Right lobe of liver (tissue), 6 donors: ENCODE measurements at regions of chr19 and their contacts with region 1.

Region 1: GRCh38 chr19:38647368-38647965 is at the start of gene ACTN4:
- DNase-seq: peak; percentile 99 to 100 (median 100)
- ATAC-seq: peak; percentile 79 to 92 (median 86)
- H3K4me3 ChIP-seq: peak within 1 kb of the TSS; percentile 86 to 88 (median 87)
- H3K27ac ChIP-seq: peak within 1 kb of the TSS; percentile 89 to 94 (median 92)
- H3K4me1 ChIP-seq: peaks cover 0 to 32% (median 13%) of the 10 kb centered on the region in 4 donors
- H3K27me3 ChIP-seq: no peaks in the 10 kb centered on the region
- CTCF ChIP-seq: no peak
- POLR2A ChIP-seq: peak; percentile 100
- total RNA-seq, gene ACTN4: 142 to 306 (median 201) TPM

Region 2: GRCh38 chr19:38693380-38694223 is 46.1 kb after region 1 on chr19:
- intact Hi-C with region 1: loop called in 1 of 2 experiments (anchors 10 kb)
- DNase-seq: peak in 1 of 3 donors; percentile 60
- ATAC-seq: peak; percentile 16 to 51 (median 43)
- H3K4me3 ChIP-seq: no peak overlapping the region
- H3K27ac ChIP-seq: peak overlapping the region; percentile 23 to 67 (median 57)
- H3K4me1 ChIP-seq: peaks cover 0 to 59% (median 29%) of the 10 kb centered on the region in 4 donors
- H3K27me3 ChIP-seq: no peaks in the 10 kb centered on the region
- CTCF ChIP-seq: no peak
- POLR2A ChIP-seq: no peak

Region 3: DNA sequence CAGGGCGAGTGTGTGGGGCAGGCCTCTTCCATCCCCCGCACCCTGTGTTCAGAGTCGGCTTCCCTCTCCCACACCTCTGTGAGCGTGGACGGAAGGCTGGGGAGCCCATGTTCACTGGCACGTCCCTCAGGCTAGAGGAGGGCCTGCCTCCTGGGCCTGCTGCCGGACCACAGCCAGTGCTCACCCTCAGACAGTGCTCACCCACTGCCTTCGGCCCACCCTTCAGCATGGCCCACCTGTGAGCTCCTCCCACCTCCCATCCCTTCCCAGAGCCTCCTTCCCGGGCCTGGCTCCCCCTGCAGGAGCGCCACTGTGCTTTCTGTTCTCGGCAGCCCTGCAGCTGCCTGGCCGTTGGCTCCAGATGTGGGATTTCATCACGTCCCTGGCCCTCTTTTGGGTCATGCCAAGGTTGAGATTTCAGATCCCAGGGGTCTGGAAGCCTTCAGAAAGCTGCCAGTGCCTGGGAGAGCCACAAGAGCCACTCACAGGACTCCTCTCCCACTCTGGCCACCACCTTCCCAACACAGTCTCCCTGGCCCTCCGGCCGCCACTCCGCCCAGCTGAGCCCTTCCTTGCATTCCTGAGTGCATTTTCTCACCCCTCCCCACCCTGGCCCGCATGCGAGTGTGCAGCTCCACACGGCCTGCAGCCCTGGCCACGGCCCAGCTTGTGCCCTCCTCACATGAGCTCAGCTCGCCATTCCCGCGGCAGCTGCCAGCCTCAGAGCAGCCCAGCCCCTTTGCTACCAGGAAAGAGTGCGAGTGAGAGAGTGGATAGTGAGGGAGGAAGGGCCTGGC is 71.5 kb after region 1 on chr19:
- intact Hi-C with region 1: loop called in 1 of 2 experiments (anchors 5 kb)
- DNase-seq: no peak
- ATAC-seq: peak; percentile 1 to 14 (median 6)
- H3K4me3 ChIP-seq: no peak overlapping the region
- H3K27ac ChIP-seq: peak overlapping the region in 1 of 3 donors; percentile 29
- H3K4me1 ChIP-seq: peaks cover 0 to 15% (median 6%) of the 10 kb centered on the region in 4 donors
- H3K27me3 ChIP-seq: no peaks in the 10 kb centered on the region
- CTCF ChIP-seq: peak; percentile 16 to 35 (median 19)
- POLR2A ChIP-seq: no peak